Transverse colon (tissue), 4 donors: ENCODE measurements at regions of chr4 and their contacts with region 1.

Region 1: DNA sequence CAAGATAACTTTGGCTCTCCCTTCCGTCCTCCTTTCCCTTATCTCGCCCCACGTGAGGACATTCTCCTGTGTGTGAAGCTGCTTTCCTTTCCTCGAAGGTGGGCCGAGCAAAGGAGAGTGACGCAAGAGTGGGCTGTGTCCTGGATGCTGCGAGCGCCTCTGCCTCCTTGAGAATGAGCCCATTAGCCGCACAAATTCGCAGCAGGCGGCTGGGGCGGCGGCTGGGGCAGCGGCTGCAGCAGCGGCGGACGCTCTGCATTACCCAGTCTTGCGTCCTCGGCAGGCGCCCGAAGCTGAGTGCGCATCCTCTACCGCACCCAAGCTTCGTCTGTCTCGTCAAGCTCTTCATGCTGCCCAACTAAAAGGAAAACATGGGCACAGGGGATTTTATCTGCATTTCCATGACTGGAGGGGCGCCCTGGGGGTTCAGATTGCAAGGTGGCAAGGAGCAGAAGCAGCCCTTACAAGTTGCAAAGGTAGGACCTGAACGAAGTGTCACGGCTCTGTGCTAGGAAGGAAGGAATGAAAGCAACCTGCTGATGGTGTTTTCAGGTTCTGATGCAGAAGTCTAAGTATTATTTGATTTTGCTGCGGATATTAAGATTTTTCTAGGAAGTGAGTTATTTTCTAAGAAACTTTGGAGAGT is at the start of gene SYNPO2:
- DNase-seq: peak; percentile 72
- H3K4me3 ChIP-seq: peak within 1 kb of the TSS; percentile 36 to 60 (median 38)
- H3K27ac ChIP-seq: peak within 1 kb of the TSS; percentile 74 to 87 (median 81)
- H3K4me1 ChIP-seq: peaks cover 0 to 11% (median 2%) of the 10 kb centered on the region in 4 donors
- H3K27me3 ChIP-seq: peaks cover 26% of the 10 kb centered on the region
- CTCF ChIP-seq: no peak
- EP300 ChIP-seq: no peak
- POLR2A ChIP-seq: peak; percentile 79
- total RNA-seq, gene SYNPO2: 99.7 to 400 (median 145) TPM

Region 2: DNA sequence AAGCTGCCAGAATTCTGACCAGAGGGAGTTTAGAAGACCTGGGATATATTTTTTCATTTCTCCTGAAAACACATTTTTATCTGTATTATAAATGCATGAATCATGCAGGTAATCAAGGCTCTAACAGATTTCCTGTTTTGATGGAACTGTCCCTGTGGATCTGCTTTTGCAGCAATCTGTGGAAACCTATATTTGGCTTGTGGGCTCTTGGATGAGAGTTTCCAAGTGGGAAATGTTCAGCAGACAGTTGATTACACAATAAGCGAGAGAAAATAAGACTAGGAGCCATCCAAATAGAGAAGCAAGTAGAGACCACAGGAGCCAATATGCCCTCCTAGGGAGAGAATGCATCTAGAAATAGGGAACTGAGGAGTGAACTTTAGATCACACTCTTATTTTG is 749.5 kb before region 1 on chr4:
- in situ Hi-C with region 1: no loop called
- intact Hi-C with region 1: no loop called
- DNase-seq: no peak
- H3K4me3 ChIP-seq: no peak overlapping the region
- H3K27ac ChIP-seq: no peak overlapping the region
- H3K4me1 ChIP-seq: no peaks in the 10 kb centered on the region
- H3K27me3 ChIP-seq: no peaks in the 10 kb centered on the region
- CTCF ChIP-seq: no peak
- EP300 ChIP-seq: no peak
- POLR2A ChIP-seq: no peak

Region 3: GRCh38 chr4:118765399-118765798 is 123.4 kb before region 1 on chr4:
- in situ Hi-C with region 1: loop called in 3 of 4 experiments (anchors 10 to 25 kb)
- intact Hi-C with region 1: loop called (anchors 10 kb)
- DNase-seq: no peak
- H3K4me3 ChIP-seq: no peak overlapping the region
- H3K27ac ChIP-seq: peak overlapping the region; percentile 64 to 81 (median 76)
- H3K4me1 ChIP-seq: peaks cover 6 to 64% (median 10%) of the 10 kb centered on the region in 4 donors
- H3K27me3 ChIP-seq: no peaks in the 10 kb centered on the region
- CTCF ChIP-seq: no peak
- EP300 ChIP-seq: peak; percentile 35
- POLR2A ChIP-seq: no peak

Region 4: GRCh38 chr4:118772081-118772766 is 116.6 kb before region 1 on chr4:
- in situ Hi-C with region 1: loop called in 3 of 4 experiments (anchors 10 to 25 kb)
- intact Hi-C with region 1: loop called (anchors 10 kb)
- DNase-seq: no peak
- H3K4me3 ChIP-seq: no peak overlapping the region
- H3K27ac ChIP-seq: peak overlapping the region; percentile 66 to 81 (median 78)
- H3K4me1 ChIP-seq: peaks cover 0 to 46% (median 9%) of the 10 kb centered on the region in 4 donors
- H3K27me3 ChIP-seq: no peaks in the 10 kb centered on the region
- CTCF ChIP-seq: peak; percentile 49 to 72 (median 57)
- EP300 ChIP-seq: no peak
- POLR2A ChIP-seq: no peak

Region 5: GRCh38 chr4:118835571-118836300 is 53.1 kb before region 1 on chr4 and contains the start of gene SEC24D:
- in situ Hi-C with region 1: no loop called
- intact Hi-C with region 1: loop called (anchors 10 kb)
- DNase-seq: peak; percentile 90
- H3K4me3 ChIP-seq: peak within 1 kb of the TSS; percentile 83 to 97 (median 87)
- H3K27ac ChIP-seq: peak within 1 kb of the TSS; percentile 96 to 99 (median 98)
- H3K4me1 ChIP-seq: peaks cover 7 to 25% (median 11%) of the 10 kb centered on the region in 4 donors
- H3K27me3 ChIP-seq: no peaks in the 10 kb centered on the region
- CTCF ChIP-seq: peak in 1 of 5 experiments; percentile 5
- EP300 ChIP-seq: no peak
- POLR2A ChIP-seq: peak; percentile 75
- total RNA-seq, gene SEC24D: 9.7 to 37.9 (median 17.0) TPM